HepG2 (cell line): ENCODE measurements at regions of chr15 and their contacts with region 1.

Region 1: GRCh38 chr15:79004336-79004735 is 59.5 kb upstream of the CTSH start:
- DNase-seq: peak; percentile 62
- ATAC-seq: peak; percentile 36; the same call in 2 of the 3 replicates
- H3K4me3 ChIP-seq: no peak overlapping the region
- H3K27ac ChIP-seq: no peak overlapping the region
- H3K4me1 ChIP-seq: peaks cover 38% of the 10 kb centered on the region
- H3K27me3 ChIP-seq: no peaks in the 10 kb centered on the region
- CTCF ChIP-seq: no peak
- EP300 ChIP-seq: no peak
- POLR2A ChIP-seq: no peak
- RAD21 ChIP-seq: no peak

Region 2: DNA sequence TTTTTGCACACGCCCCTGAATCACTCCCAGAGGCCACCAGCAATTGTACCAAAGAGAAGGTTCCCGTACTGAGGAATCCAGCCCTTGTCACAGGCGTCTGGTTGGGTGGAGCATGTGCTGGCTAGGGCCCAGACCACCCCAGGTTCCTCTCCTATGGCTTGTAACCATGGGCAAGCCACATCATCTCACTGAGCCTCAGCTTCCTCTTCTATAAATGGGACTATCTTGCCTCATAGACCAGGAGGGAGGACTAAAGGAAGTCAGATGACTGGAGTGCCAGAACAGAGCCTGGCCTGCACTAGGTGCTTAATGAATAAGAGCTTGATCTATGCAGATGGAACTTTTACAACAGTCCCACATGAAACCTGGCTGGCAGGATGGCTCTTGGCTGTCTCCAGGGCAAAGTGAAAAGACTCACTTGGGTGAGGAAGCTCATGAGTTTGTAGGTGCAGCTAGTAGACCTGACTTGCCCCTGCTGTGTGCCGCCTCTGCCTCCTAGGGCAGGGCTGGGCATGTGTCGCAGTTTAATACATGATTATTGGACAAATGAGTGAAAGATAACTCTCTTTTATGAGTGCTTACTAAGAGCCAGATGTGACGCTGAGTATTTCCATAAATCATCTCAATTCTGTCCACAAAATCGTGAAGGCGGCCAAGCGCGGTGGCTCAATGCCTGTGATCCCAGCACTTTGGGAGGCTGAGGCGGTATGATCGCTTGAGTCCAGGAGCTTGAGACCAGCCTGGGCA is 88.8 kb before region 1 on chr15:
- CTCF ChIA-PET with region 1: interaction called, 8 read pairs
- POLR2A ChIA-PET with region 1: interaction called, 4 read pairs
- in situ Hi-C with region 1: no loop called
- intact Hi-C with region 1: loop called (anchors 5 kb)
- DNase-seq: no peak
- ATAC-seq: no peak
- H3K4me3 ChIP-seq: no peak overlapping the region
- H3K27ac ChIP-seq: no peak overlapping the region
- H3K4me1 ChIP-seq: peaks cover 47% of the 10 kb centered on the region
- H3K27me3 ChIP-seq: no peaks in the 10 kb centered on the region
- CTCF ChIP-seq: no peak
- EP300 ChIP-seq: no peak
- POLR2A ChIP-seq: no peak
- RAD21 ChIP-seq: no peak

Region 3: DNA sequence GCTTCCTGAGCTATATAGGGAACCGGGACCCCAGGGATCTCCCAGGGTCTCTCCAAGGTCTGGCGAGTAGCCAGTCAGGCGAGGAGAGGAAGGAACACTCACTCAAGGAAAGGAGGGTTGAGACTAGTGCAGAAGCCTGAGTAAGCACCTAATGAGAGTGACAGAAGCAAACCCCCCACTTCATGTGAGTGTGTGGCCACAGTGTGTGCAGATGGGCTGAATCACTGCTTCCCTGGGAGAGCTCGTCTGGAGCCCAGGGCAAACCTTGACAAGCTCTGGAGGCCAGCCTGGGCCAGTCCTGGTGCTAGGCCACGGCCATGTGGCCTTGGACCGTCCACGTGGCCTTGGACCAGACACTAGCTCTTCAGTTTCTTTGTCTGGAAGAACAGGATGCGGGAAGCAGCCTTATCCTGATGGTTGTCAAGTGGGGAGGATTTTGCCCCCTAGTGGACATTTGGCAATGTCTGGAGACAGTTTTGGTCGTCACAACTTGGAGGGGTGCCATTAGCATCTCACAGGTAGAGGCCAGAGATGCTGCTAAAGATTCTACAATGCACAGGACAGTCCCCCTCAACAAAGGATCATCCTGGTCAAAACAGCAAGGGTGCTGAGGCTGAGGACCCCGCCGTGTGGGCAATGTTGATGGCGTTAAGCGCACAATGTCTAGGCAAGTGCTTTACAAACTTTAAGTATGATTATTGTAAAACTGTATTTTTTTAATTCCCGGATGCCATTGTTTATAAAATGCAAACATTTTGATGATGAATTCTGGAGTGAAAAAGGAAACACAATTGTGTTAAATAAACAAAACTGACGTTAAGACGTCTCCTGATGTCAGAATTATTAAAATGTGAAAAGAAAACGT is 24.6 kb before region 1 on chr15:
- CTCF ChIA-PET with region 1: interaction called, 18 read pairs
- POLR2A ChIA-PET with region 1: interaction called, 3 read pairs
- in situ Hi-C with region 1: no loop called
- intact Hi-C with region 1: no loop called
- DNase-seq: peak; percentile 85
- ATAC-seq: peak; percentile 75
- H3K4me3 ChIP-seq: no peak overlapping the region
- H3K27ac ChIP-seq: no peak overlapping the region
- H3K4me1 ChIP-seq: peaks cover 49% of the 10 kb centered on the region
- H3K27me3 ChIP-seq: no peaks in the 10 kb centered on the region
- CTCF ChIP-seq: peak; percentile 88
- EP300 ChIP-seq: peak in 1 of 2 experiments; percentile 52; a peak in 1 of 4 replicates
- POLR2A ChIP-seq: no peak
- RAD21 ChIP-seq: peak; percentile 81